ENCODE measurements at regions of chr12 and their contacts with region 1.

Region 1: DNA sequence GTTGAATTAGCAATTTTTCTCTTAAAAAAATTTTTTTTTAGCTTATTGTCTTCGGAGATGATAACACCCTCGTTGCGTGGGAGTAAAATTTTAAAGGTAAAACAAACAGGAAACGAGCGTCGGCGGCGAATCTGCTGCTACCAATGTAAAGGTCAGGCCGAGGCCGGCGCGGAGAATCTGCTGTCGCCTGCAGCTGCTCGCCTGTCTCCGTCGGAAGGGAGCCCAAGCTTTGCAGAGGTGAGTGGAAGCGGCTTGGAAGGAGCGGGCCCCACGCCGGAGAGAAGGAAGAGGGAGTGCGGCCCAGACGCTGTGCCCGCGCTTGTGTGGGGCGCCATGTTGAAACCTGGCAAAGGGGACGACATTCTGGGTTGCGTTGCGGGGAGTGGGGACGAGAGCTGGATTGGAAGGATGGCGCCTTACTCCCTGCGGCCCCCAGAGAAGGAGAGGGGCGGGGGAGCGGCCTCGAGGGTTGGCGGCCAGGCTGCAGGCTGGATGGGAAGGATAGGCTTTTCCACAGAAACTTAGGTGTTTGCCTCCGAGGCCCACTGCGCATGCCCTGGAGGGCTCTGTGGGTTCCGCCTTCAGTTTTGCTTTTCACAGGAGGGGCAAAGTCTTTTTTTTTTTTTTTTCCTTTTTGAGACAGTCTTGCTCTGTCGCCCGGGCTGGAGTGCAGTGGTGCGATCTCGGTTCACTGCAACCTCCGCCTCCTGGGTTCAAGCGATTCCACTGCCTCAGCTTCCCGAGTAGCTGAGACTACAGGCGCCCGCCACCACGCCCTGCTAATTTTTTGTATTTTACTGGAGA is at the start of gene SNRNP35:
- DNase-seq: peak; percentile 87 to 91 (median 89)
- H3K4me3 ChIP-seq: peak within 1 kb of the TSS; percentile 58 to 95
- H3K4me3 Mint-ChIP-seq: peak within 1 kb of the TSS; percentile 97 to 100 (median 100)
- H3K27ac ChIP-seq: peak within 1 kb of the TSS; percentile 95
- H3K27ac Mint-ChIP-seq: peak within 1 kb of the TSS; percentile 98 to 100 (median 100)
- H3K4me1 ChIP-seq: peaks cover 26% of the 10 kb centered on the region
- H3K4me1 Mint-ChIP-seq: peaks cover 19 to 37% (median 29%) of the 10 kb centered on the region in 4 donors
- H3K27me3 ChIP-seq: no peaks in the 10 kb centered on the region
- H3K27me3 Mint-ChIP-seq: no peaks in the 10 kb centered on the region
- total RNA-seq, gene SNRNP35: 44.0 to 49.5 TPM

Region 2: DNA sequence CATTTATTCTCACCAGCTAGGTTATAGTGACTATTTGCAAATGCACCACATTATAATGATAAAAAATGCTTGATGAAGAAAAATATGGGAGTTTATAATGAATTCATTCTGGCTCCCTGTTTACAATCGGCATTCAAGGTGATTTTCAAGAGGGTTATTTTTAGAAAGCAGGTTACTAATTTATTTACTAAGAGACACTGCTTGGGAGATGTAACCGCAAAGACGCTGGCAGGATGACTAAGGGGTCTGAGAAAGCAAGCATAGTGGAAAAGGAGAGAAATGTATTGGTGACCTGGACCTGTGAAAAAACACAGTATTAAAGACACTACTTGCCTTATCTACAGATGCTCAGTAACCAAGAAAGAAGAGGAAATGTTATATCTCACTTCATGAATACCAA is 294.0 kb before region 1 on chr12:
- CTCF ChIA-PET with region 1: no interaction called
- POLR2A ChIA-PET with region 1: no interaction called
- intact Hi-C with region 1: no loop called
- DNase-seq: no peak
- H3K4me3 ChIP-seq: no peak overlapping the region
- H3K4me3 Mint-ChIP-seq: no peak overlapping the region
- H3K27ac ChIP-seq: no peak overlapping the region
- H3K27ac Mint-ChIP-seq: peak overlapping the region in 1 of 7 donors; percentile 41
- H3K4me1 ChIP-seq: no peaks in the 10 kb centered on the region
- H3K4me1 Mint-ChIP-seq: peaks cover 0 to 4% (median 3%) of the 10 kb centered on the region in 4 donors
- H3K27me3 ChIP-seq: no peaks in the 10 kb centered on the region
- H3K27me3 Mint-ChIP-seq: no peaks in the 10 kb centered on the region

Region 3: GRCh38 chr12:123388177-123388947 is 69.8 kb before region 1 on chr12:
- CTCF ChIA-PET with region 1: no interaction called
- POLR2A ChIA-PET with region 1: interaction called, 15 read pairs
- intact Hi-C with region 1: loop called (anchors 2 kb)
- DNase-seq: peak; percentile 76 to 85 (median 79)
- H3K4me3 ChIP-seq: peak overlapping the region; percentile 71 to 84
- H3K4me3 Mint-ChIP-seq: peak overlapping the region; percentile 86 to 92 (median 88)
- H3K27ac ChIP-seq: peak overlapping the region; percentile 70
- H3K27ac Mint-ChIP-seq: peak overlapping the region; percentile 85 to 96 (median 92)
- H3K4me1 ChIP-seq: peaks cover 45% of the 10 kb centered on the region
- H3K4me1 Mint-ChIP-seq: peaks cover 18 to 57% (median 45%) of the 10 kb centered on the region in 4 donors
- H3K27me3 ChIP-seq: no peaks in the 10 kb centered on the region
- H3K27me3 Mint-ChIP-seq: no peaks in the 10 kb centered on the region

Region 4: DNA sequence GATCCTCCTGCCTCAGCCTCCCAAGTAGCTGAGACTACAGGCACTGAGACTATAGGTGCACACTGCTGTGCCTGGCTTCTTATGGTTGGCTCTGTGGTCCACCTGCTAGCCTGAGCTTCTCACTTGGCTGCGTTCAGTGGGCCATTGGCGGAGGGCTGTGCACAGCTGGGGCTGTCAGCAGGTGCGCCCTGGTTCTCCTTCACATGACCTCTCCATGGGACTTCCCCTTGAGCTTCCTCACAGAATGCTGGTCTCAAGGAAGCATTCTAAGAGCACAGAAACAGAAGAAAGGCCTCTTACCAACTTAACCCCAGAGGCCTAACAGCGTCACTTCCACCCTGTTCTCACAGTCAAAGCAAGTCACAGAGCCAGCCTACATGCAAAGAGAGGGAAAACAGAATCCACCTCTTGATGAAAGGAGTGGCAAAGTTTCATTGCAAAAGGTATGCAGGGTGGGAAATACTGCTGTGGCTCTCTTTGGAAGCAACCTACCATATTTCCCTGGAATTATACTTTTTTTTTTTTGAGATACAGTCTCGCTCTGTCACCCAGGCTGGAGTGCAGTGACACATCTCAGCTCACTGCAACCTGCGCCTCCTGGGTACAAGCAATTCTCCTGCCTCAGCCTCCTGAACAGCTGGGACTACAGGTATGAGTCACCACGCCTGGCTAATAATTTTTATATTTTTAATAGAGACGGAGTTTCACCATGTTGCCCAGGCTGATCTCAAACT is 31.0 kb before region 1 on chr12:
- CTCF ChIA-PET with region 1: interaction called, 6 read pairs
- POLR2A ChIA-PET with region 1: interaction called, 137 read pairs
- intact Hi-C with region 1: no loop called
- DNase-seq: peak; percentile 59 to 76 (median 69)
- H3K4me3 ChIP-seq: no peak overlapping the region
- H3K4me3 Mint-ChIP-seq: peak overlapping the region in 7 of 8 donors; percentile 10 to 73 (median 48)
- H3K27ac ChIP-seq: peak overlapping the region; percentile 44
- H3K27ac Mint-ChIP-seq: peak overlapping the region; percentile 85 to 94 (median 90)
- H3K4me1 ChIP-seq: peaks cover 36% of the 10 kb centered on the region
- H3K4me1 Mint-ChIP-seq: peaks cover 21 to 43% (median 29%) of the 10 kb centered on the region in 4 donors
- H3K27me3 ChIP-seq: no peaks in the 10 kb centered on the region
- H3K27me3 Mint-ChIP-seq: no peaks in the 10 kb centered on the region

Region 5: GRCh38 chr12:123436017-123436964 is 21.9 kb before region 1 on chr12 and contains the start of gene RILPL2:
- CTCF ChIA-PET with region 1: interaction called, 10 read pairs
- POLR2A ChIA-PET with region 1: interaction called, 137 read pairs
- intact Hi-C with region 1: loop called (anchors 1 kb)
- DNase-seq: peak; percentile 92 to 97 (median 94)
- H3K4me3 ChIP-seq: peak within 1 kb of the TSS; percentile 79 to 95
- H3K4me3 Mint-ChIP-seq: peak within 1 kb of the TSS; percentile 93 to 97 (median 95)
- H3K27ac ChIP-seq: peak within 1 kb of the TSS; percentile 98
- H3K27ac Mint-ChIP-seq: peak within 1 kb of the TSS; percentile 88 to 99 (median 96)
- H3K4me1 ChIP-seq: peaks cover 52% of the 10 kb centered on the region
- H3K4me1 Mint-ChIP-seq: peaks cover 23 to 63% (median 42%) of the 10 kb centered on the region in 4 donors
- H3K27me3 ChIP-seq: no peaks in the 10 kb centered on the region
- H3K27me3 Mint-ChIP-seq: no peaks in the 10 kb centered on the region
- total RNA-seq, gene RILPL2: 11.6 to 11.9 TPM

Region 6: GRCh38 chr12:123445388-123446351 is 12.5 kb before region 1 on chr12:
- CTCF ChIA-PET with region 1: interaction called, 13 read pairs
- POLR2A ChIA-PET with region 1: interaction called, 132 read pairs
- intact Hi-C with region 1: no loop called
- DNase-seq: no peak
- H3K4me3 ChIP-seq: no peak overlapping the region
- H3K4me3 Mint-ChIP-seq: peak overlapping the region; percentile 63 to 75 (median 72)
- H3K27ac ChIP-seq: peak overlapping the region; percentile 18
- H3K27ac Mint-ChIP-seq: peak overlapping the region; percentile 77 to 95 (median 86)
- H3K4me1 ChIP-seq: peaks cover 38% of the 10 kb centered on the region
- H3K4me1 Mint-ChIP-seq: peaks cover 20 to 42% (median 34%) of the 10 kb centered on the region in 4 donors
- H3K27me3 ChIP-seq: no peaks in the 10 kb centered on the region
- H3K27me3 Mint-ChIP-seq: no peaks in the 10 kb centered on the region

Region 7: GRCh38 chr12:123468562-123469185 is 10.5 kb after region 1 on chr12:
- CTCF ChIA-PET with region 1: interaction called, 14 read pairs
- POLR2A ChIA-PET with region 1: interaction called, 42 read pairs
- intact Hi-C with region 1: loop called (anchors 1 kb)
- DNase-seq: peak in 3 of 5 donors; percentile 33 to 39 (median 37)
- H3K4me3 ChIP-seq: no peak overlapping the region
- H3K4me3 Mint-ChIP-seq: no peak overlapping the region
- H3K27ac ChIP-seq: no peak overlapping the region
- H3K27ac Mint-ChIP-seq: peak overlapping the region in 3 of 7 donors; percentile 24 to 42 (median 31)
- H3K4me1 ChIP-seq: peaks cover 4% of the 10 kb centered on the region
- H3K4me1 Mint-ChIP-seq: peaks cover 9 to 24% (median 14%) of the 10 kb centered on the region in 4 donors
- H3K27me3 ChIP-seq: no peaks in the 10 kb centered on the region
- H3K27me3 Mint-ChIP-seq: no peaks in the 10 kb centered on the region

Region 8: DNA sequence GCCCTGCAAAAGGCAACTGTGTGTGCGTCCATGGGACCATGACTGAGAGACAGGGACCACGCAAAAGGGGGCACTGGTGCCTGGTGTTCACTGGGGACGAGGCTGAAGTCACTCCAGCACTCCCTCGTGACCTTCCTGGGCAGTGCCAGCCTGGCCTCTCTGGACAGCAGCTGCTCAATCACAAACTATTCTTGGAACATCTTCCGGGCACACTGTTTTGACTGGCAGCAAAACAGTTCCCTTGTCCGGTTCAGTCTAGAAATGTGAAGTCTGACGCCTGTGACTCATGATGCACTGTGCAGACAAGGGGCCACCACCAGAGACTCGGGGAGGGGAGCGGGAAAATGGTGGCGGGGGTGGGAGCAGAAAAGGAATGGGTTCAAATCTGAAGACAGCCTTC is 20.6 kb after region 1 on chr12:
- CTCF ChIA-PET with region 1: interaction called, 3 read pairs
- POLR2A ChIA-PET with region 1: interaction called, 42 read pairs
- intact Hi-C with region 1: loop called (anchors 2 kb)
- DNase-seq: no peak
- H3K4me3 ChIP-seq: no peak overlapping the region
- H3K4me3 Mint-ChIP-seq: no peak overlapping the region
- H3K27ac ChIP-seq: no peak overlapping the region
- H3K27ac Mint-ChIP-seq: peak overlapping the region in 2 of 7 donors; percentile 32 to 52
- H3K4me1 ChIP-seq: peaks cover 31% of the 10 kb centered on the region
- H3K4me1 Mint-ChIP-seq: peaks cover 22 to 49% (median 35%) of the 10 kb centered on the region in 4 donors
- H3K27me3 ChIP-seq: no peaks in the 10 kb centered on the region
- H3K27me3 Mint-ChIP-seq: no peaks in the 10 kb centered on the region

Region 9: GRCh38 chr12:123490089-123490488 is 31.9 kb after region 1 on chr12:
- CTCF ChIA-PET with region 1: no interaction called
- POLR2A ChIA-PET with region 1: no interaction called
- intact Hi-C with region 1: no loop called
- DNase-seq: no peak
- H3K4me3 ChIP-seq: no peak overlapping the region
- H3K4me3 Mint-ChIP-seq: no peak overlapping the region
- H3K27ac ChIP-seq: no peak overlapping the region
- H3K27ac Mint-ChIP-seq: peak overlapping the region in 1 of 7 donors; percentile 7
- H3K4me1 ChIP-seq: peaks cover 2% of the 10 kb centered on the region
- H3K4me1 Mint-ChIP-seq: peaks cover 0 to 6% (median 3%) of the 10 kb centered on the region in 4 donors
- H3K27me3 ChIP-seq: no peaks in the 10 kb centered on the region
- H3K27me3 Mint-ChIP-seq: no peaks in the 10 kb centered on the region

Region 10: GRCh38 chr12:123681605-123682004 is 223.4 kb after region 1 on chr12:
- CTCF ChIA-PET with region 1: no interaction called
- POLR2A ChIA-PET with region 1: no interaction called
- intact Hi-C with region 1: no loop called
- DNase-seq: no peak
- H3K4me3 ChIP-seq: no peak overlapping the region
- H3K4me3 Mint-ChIP-seq: no peak overlapping the region
- H3K27ac ChIP-seq: no peak overlapping the region
- H3K27ac Mint-ChIP-seq: peak overlapping the region in 1 of 7 donors; percentile 47
- H3K4me1 ChIP-seq: no peaks in the 10 kb centered on the region
- H3K4me1 Mint-ChIP-seq: peaks cover 0 to 1% (median 0%) of the 10 kb centered on the region in 4 donors
- H3K27me3 ChIP-seq: no peaks in the 10 kb centered on the region
- H3K27me3 Mint-ChIP-seq: no peaks in the 10 kb centered on the region

Measured in CD4-positive, alpha-beta memory T cell (primary cell).